Activated CD4-positive, alpha-beta memory T cell treated with anti-CD3 and anti-CD28 coated beads for 36 hours (primary cell): ENCODE measurements at regions of chr2 and their contacts with region 1.

Region 1: GRCh38 chr2:241702132-241703031 is 543 bp downstream of the ING5 start:
- DNase-seq: peak; percentile 90
- H3K4me3 Mint-ChIP-seq: peak overlapping the region; percentile 84
- H3K27ac Mint-ChIP-seq: peak overlapping the region; percentile 63
- H3K4me1 Mint-ChIP-seq: peaks cover 25% of the 10 kb centered on the region
- H3K27me3 Mint-ChIP-seq: no peaks in the 10 kb centered on the region

Region 2: DNA sequence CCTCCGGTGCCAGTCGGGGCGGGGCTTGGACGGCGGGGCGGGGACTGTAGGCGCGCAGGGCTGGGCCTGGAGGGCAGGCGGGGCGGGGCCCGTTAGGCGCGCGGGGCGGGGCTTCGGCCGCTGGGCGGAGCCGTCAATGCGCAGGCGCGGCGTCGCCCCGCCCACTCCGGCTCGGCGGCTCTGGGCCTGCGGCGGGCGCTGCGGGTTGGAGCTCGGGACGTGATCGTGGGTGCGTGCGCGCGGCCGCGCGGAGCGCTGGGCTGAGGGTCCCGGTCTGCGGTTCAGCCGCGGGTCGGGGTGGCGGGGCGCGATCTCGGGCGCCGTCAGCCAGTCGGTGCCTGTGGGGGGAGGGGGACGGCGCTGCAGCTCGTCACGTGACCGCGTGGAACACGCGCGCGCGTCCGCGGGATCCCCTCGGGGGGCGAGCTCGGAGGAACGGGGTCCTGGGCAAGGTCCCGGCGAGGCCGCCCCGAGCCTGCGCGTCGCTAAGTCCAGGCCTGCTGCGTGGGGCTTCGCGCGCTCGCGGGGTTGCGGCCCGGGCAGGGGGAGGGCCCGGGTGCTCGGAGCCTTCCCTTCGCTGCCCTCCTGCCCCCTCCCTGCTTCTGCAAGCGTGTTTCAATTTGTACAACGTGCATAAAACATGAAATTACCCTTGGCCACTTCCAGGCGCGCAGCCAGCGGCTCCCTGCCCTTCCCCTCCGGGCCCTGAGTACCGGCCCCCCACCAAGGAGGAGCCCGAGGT is 32.3 kb after region 1 on chr2 and contains the start of gene D2HGDH:
- CTCF ChIA-PET with region 1: interaction called, 50 read pairs
- POLR2A ChIA-PET with region 1: interaction called, 11 read pairs
- intact Hi-C with region 1: loop called (anchors 1 kb)
- DNase-seq: peak; percentile 95
- H3K4me3 Mint-ChIP-seq: peak within 1 kb of the TSS; percentile 81
- H3K27ac Mint-ChIP-seq: peak within 1 kb of the TSS; percentile 70
- H3K4me1 Mint-ChIP-seq: peaks cover 49% of the 10 kb centered on the region
- H3K27me3 Mint-ChIP-seq: no peaks in the 10 kb centered on the region
- total RNA-seq, gene D2HGDH: 27.5 to 28.2 TPM

Region 3: GRCh38 chr2:241895712-241896641 is 193.6 kb after region 1 on chr2:
- CTCF ChIA-PET with region 1: no interaction called
- POLR2A ChIA-PET with region 1: no interaction called
- intact Hi-C with region 1: no loop called
- DNase-seq: peak; percentile 22
- H3K4me3 Mint-ChIP-seq: peak overlapping the region; percentile 68
- H3K27ac Mint-ChIP-seq: peak overlapping the region; percentile 94
- H3K4me1 Mint-ChIP-seq: peaks cover 4% of the 10 kb centered on the region
- H3K27me3 Mint-ChIP-seq: peaks cover 2% of the 10 kb centered on the region